ENCODE measurements at regions of chr11 and their contacts with region 1.

Region 1: DNA sequence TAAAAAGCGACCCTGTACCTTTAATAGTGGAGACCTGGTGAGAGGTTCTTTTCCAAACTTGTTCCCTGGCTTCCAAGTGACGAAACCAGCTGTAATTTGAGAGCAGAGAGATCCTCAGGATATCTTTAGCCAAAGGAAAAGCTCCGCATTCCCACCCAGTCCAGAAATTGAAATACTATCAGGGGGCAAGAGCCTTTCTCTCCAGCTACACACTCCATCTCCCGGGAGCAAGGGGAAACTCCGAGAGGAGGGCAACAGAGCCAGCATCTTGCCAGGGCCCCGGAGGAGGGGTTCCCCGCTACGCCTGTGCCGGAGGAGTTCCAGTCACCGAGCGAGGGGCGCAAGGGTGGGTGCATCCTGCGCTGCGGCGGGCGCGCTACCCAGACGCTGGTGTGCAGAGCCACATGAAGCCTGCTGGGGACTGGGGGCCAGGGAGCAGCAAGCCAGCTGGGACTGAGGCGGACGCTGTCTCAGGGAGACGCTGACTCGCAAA is at the start of gene FIBIN:
- DNase-seq: no peak
- H3K4me3 ChIP-seq: peak within 1 kb of the TSS; percentile 80
- H3K27ac ChIP-seq: no peak within 1 kb of the TSS
- H3K27me3 ChIP-seq: no peaks in the 10 kb centered on the region
- CTCF ChIP-seq: peak; percentile 13; the same call in 1 of the 2 replicates
- polyA plus RNA-seq, gene FIBIN: 44.4 and 49.0 TPM in 2 replicates

Region 2: DNA sequence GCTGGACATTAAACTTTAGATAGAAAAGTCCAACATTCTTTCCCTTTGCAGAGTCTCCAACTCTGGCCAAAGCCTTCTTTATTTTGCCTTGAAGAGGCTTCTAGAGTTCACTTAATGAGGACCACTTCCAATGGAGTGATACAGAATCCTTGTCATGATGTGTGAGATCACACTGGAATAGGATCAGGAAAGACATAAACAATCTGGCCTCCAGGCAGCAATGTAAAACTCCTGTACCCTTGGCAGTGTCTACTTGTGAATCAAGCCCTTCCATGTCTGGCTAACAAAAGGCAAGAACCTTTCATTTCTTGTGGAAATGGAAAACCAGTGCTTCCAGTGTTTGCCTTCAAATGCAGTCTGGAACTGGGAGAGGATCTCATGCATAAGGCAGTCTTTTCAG is 56.6 kb before region 1 on chr11:
- CTCF ChIA-PET with region 1: no interaction called
- POLR2A ChIA-PET with region 1: no interaction called
- DNase-seq: no peak
- H3K4me3 ChIP-seq: no peak overlapping the region
- H3K27ac ChIP-seq: no peak overlapping the region
- H3K27me3 ChIP-seq: no peaks in the 10 kb centered on the region
- CTCF ChIP-seq: no peak

Region 3: GRCh38 chr11:27012234-27012921 is 18.4 kb after region 1 on chr11:
- CTCF ChIA-PET with region 1: no interaction called
- POLR2A ChIA-PET with region 1: no interaction called
- DNase-seq: peak; percentile 64
- H3K4me3 ChIP-seq: peak overlapping the region; percentile 20; the same call in 1 of the 2 replicates
- H3K27ac ChIP-seq: no peak overlapping the region
- H3K27me3 ChIP-seq: no peaks in the 10 kb centered on the region
- CTCF ChIP-seq: no peak

Region 4: DNA sequence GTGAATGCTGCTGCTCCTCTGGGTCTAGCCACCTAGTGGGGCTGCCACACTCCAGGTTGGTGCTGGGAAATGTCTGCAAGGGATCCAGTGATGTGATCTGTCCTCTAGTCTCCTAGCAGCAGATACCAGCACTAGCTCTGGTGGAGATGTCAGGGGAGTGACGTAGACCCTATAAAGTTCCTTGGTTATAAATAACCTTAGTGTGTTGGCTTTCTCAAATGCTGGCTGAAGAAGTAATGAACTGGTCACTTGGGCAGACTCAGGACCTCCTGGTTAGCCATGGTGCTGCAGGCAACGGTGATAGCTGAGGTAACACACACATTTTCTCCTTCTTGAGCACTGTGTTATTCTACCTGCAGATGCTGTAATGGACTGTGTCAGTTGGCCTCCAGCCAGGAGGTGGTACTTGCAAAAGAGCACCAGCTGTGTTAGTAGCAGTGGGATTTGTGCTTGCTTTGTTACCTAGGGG is 82.1 kb after region 1 on chr11:
- CTCF ChIA-PET with region 1: no interaction called
- POLR2A ChIA-PET with region 1: interaction called, 12 read pairs
- DNase-seq: no peak
- H3K4me3 ChIP-seq: no peak overlapping the region
- H3K27ac ChIP-seq: no peak overlapping the region
- H3K27me3 ChIP-seq: no peaks in the 10 kb centered on the region
- CTCF ChIP-seq: no peak

Measured in AG04450 (cell line).